GM12878 (cell line): ENCODE measurements at regions of chr19 and their contacts with region 1.

Region 1: GRCh38 chr19:6516659-6517291 is 14.1 kb upstream of the TNFSF9 start:
- DNase-seq: no peak
- ATAC-seq: peak; percentile 83
- H3K4me3 ChIP-seq: peak overlapping the region; percentile 92
- H3K27ac ChIP-seq: peak overlapping the region; percentile 98
- H3K4me1 ChIP-seq: peaks cover 33% of the 10 kb centered on the region
- H3K27me3 ChIP-seq: no peaks in the 10 kb centered on the region
- CTCF ChIP-seq: peak; percentile 96 to 99 (median 97); a peak in 5 of 6 replicates
- EP300 ChIP-seq: 0 out of 4 replicates have a peak, but pooled peaks of 1 of the 2 experiments have one; percentile 13
- POLR2A ChIP-seq: peak; percentile 63; the same call in 1 of the 2 replicates
- RAD21 ChIP-seq: peak; percentile 100

Region 2: GRCh38 chr19:6450166-6450565 is 66.6 kb before region 1 on chr19:
- CTCF ChIA-PET with region 1: no interaction called
- POLR2A ChIA-PET with region 1: no interaction called
- RAD21 ChIA-PET with region 1: no interaction called
- SMC1A ChIA-PET with region 1: no interaction called
- in situ Hi-C with region 1: no loop called
- intact Hi-C with region 1: no loop called
- DNase-seq: no peak
- ATAC-seq: no peak
- H3K4me3 ChIP-seq: no peak overlapping the region
- H3K27ac ChIP-seq: no peak overlapping the region
- H3K4me1 ChIP-seq: no peaks in the 10 kb centered on the region
- H3K27me3 ChIP-seq: no peaks in the 10 kb centered on the region
- CTCF ChIP-seq: no peak
- EP300 ChIP-seq: no peak
- POLR2A ChIP-seq: no peak
- RAD21 ChIP-seq: no peak

Region 3: GRCh38 chr19:6530386-6531161 is 13.8 kb after region 1 on chr19 and contains the start of gene TNFSF9:
- CTCF ChIA-PET with region 1: interaction called, 10 read pairs
- POLR2A ChIA-PET with region 1: interaction called, 23 read pairs
- RAD21 ChIA-PET with region 1: interaction called, 16 read pairs
- SMC1A ChIA-PET with region 1: interaction called, 10 read pairs
- in situ Hi-C with region 1: no loop called
- intact Hi-C with region 1: loop called (anchors 2 kb)
- DNase-seq: no peak
- ATAC-seq: peak; percentile 55
- H3K4me3 ChIP-seq: peak within 1 kb of the TSS; percentile 99
- H3K27ac ChIP-seq: peak within 1 kb of the TSS; percentile 83
- H3K4me1 ChIP-seq: peaks cover 34% of the 10 kb centered on the region
- H3K27me3 ChIP-seq: no peaks in the 10 kb centered on the region
- CTCF ChIP-seq: no peak
- EP300 ChIP-seq: no peak
- POLR2A ChIP-seq: peak; percentile 98
- RAD21 ChIP-seq: no peak
- polyA plus RNA-seq, gene TNFSF9: 6.2 to 12.8 TPM

Region 4: GRCh38 chr19:6577476-6578125 is 60.8 kb after region 1 on chr19:
- CTCF ChIA-PET with region 1: interaction called, 8 read pairs
- POLR2A ChIA-PET with region 1: interaction called, 12 read pairs
- RAD21 ChIA-PET with region 1: interaction called, 5 read pairs
- SMC1A ChIA-PET with region 1: interaction called, 11 read pairs
- in situ Hi-C with region 1: no loop called
- intact Hi-C with region 1: no loop called
- DNase-seq: peak; percentile 96
- ATAC-seq: peak; percentile 89
- H3K4me3 ChIP-seq: peak overlapping the region; percentile 26; the same call in 1 of the 2 replicates
- H3K27ac ChIP-seq: peak overlapping the region; percentile 99
- H3K4me1 ChIP-seq: peaks cover 50% of the 10 kb centered on the region
- H3K27me3 ChIP-seq: no peaks in the 10 kb centered on the region
- CTCF ChIP-seq: no peak
- EP300 ChIP-seq: peak; percentile 81 to 98
- POLR2A ChIP-seq: peak; percentile 69
- RAD21 ChIP-seq: no peak

Region 5: GRCh38 chr19:6639439-6639838 is 122.7 kb after region 1 on chr19:
- CTCF ChIA-PET with region 1: interaction called, 13 read pairs
- POLR2A ChIA-PET with region 1: interaction called, 7 read pairs
- RAD21 ChIA-PET with region 1: interaction called, 30 read pairs
- SMC1A ChIA-PET with region 1: interaction called, 23 read pairs
- in situ Hi-C with region 1: no loop called
- intact Hi-C with region 1: no loop called
- DNase-seq: no peak
- ATAC-seq: peak; percentile 17
- H3K4me3 ChIP-seq: no peak overlapping the region
- H3K27ac ChIP-seq: peak overlapping the region; percentile 13
- H3K4me1 ChIP-seq: peaks cover 30% of the 10 kb centered on the region
- H3K27me3 ChIP-seq: no peaks in the 10 kb centered on the region
- CTCF ChIP-seq: no peak
- EP300 ChIP-seq: no peak
- POLR2A ChIP-seq: no peak
- RAD21 ChIP-seq: no peak

Region 6: DNA sequence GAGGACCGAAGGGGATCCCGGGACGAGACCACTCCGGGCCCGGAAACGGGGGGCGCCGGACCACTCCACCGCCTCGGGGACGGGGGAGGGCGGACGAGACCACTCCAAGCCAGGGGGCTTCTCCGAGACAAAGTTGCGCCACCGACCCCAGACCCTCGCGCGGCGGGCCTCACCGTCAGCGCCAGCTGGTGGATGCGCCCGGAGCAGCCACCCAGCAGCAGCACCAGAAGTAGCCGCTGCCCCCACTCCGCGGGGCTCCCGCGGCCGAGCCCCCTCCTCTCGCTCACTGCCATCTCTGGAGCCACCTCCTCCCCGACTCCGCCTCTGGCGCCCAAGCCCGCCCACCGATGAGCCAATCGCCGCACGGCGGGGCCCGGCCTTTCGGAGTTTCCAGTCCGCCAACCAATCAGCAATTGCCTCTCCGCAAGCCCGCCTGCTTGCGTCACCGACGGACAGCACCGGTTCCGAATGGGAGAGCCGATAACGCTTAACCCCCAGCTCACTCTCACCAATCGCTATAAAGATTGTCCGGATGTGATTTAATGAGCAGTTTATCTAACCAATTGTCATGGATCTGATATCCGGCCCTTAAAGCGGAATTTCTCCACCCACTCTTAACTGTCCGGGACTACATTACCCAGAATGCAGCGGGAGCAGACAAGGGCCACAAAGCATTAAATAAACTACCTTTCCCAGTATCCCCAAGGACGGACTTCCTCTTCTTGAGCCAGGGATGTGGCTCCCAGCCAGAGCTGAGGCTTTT is 220.7 kb after region 1 on chr19 and contains the start of gene GPR108:
- CTCF ChIA-PET with region 1: interaction called, 5 read pairs
- POLR2A ChIA-PET with region 1: interaction called, 12 read pairs
- RAD21 ChIA-PET with region 1: interaction called, 33 read pairs
- SMC1A ChIA-PET with region 1: interaction called, 14 read pairs
- in situ Hi-C with region 1: loop called (anchors 5 kb)
- intact Hi-C with region 1: loop called (anchors 1 kb)
- DNase-seq: peak; percentile 100
- ATAC-seq: peak; percentile 82
- H3K4me3 ChIP-seq: peak within 1 kb of the TSS; percentile 100
- H3K27ac ChIP-seq: peak within 1 kb of the TSS; percentile 92
- H3K4me1 ChIP-seq: peaks cover 30% of the 10 kb centered on the region
- H3K27me3 ChIP-seq: no peaks in the 10 kb centered on the region
- CTCF ChIP-seq: no peak
- EP300 ChIP-seq: no peak
- POLR2A ChIP-seq: peak; percentile 66
- RAD21 ChIP-seq: no peak
- polyA plus RNA-seq, gene GPR108: 4.4 to 17.6 TPM

Region 7: GRCh38 chr19:6862673-6863078 is 345.9 kb after region 1 on chr19:
- CTCF ChIA-PET with region 1: interaction called, 16 read pairs
- POLR2A ChIA-PET with region 1: interaction called, 3 read pairs
- RAD21 ChIA-PET with region 1: interaction called, 31 read pairs
- SMC1A ChIA-PET with region 1: interaction called, 14 read pairs
- in situ Hi-C with region 1: loop called (anchors 5 kb)
- intact Hi-C with region 1: loop called (anchors 1 kb)
- DNase-seq: peak; percentile 80
- ATAC-seq: peak; percentile 94
- H3K4me3 ChIP-seq: peak overlapping the region; percentile 67; the same call in 1 of the 2 replicates
- H3K27ac ChIP-seq: peak overlapping the region; percentile 56; the same call in 1 of the 2 replicates
- H3K4me1 ChIP-seq: peaks cover 11% of the 10 kb centered on the region
- H3K27me3 ChIP-seq: no peaks in the 10 kb centered on the region
- CTCF ChIP-seq: peak; percentile 92 to 99 (median 99); a peak in 5 of 6 replicates
- EP300 ChIP-seq: no peak
- POLR2A ChIP-seq: peak; percentile 65
- RAD21 ChIP-seq: peak; percentile 88